ENCODE measurements at regions of chrX and their contacts with region 1.

Region 1: DNA sequence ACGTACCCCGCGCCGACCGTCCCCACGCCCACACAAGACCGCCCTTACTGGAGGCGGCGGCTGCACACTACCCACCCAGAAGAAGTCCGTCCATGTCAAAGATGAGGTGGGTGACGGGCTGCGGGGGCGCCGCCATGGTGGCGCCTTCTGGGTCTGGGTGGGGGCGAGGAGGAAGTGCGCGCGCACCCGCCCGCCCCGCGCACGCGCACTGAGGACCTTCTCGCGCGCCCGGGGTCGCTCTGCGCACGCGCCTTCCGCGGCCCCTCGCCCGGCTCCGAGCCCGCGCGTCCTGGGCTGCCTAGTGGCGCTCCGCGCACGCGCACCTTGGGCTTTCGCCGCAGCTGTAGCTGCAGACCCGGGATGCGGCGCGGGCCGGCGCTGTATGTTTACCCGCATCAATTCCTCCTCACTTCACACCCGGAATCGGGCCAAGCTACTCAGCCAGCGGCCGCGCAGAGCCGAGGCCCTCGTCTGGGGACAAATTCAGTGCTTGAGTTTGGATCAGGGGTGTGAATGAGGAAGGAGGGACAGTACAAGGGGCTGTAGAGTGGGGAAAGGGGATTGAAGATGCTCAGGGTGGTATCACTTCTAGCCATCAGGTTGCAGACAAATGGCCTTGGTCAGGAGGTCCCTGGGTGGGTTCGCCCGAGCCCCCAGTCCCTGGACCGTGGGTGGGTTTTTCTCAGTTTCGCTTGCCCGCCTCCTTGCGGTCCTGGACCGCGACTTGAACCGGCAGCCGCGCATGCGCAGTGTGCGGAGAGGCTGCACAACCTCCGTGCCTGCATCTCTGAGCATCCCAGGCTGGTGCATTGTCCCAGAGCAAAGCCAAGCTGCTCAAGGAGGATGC is at the start of gene PUDP:
- DNase-seq: peak; percentile 85
- H3K4me3 Mint-ChIP-seq: peak within 1 kb of the TSS; percentile 79
- H3K27ac Mint-ChIP-seq: peak within 1 kb of the TSS; percentile 87
- H3K4me1 Mint-ChIP-seq: peaks cover 18% of the 10 kb centered on the region
- H3K27me3 Mint-ChIP-seq: no peaks in the 10 kb centered on the region
- total RNA-seq, gene PUDP: 16.3 to 16.4 TPM

Region 2: DNA sequence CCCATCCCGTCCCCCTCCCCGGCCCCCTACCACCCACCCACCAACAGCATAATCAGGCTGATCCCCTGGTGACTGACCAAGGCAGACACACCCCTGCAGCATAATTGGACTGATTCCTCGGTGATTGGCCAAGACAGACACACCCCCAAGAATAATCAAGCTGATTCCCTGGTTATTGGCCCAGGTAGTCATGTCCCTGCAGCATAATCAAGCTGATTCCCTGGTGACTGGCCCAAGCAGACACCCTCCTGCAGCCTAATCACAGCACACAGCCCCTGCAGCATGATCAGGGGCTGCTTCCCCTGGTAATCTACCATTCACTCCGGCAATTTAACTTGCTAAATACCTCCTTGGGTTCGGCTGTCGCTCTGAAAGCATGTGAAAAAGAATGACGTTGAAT is 48.2 kb before region 1 on chrX:
- CTCF ChIA-PET with region 1: no interaction called
- POLR2A ChIA-PET with region 1: no interaction called
- DNase-seq: no peak
- H3K4me3 Mint-ChIP-seq: no peak overlapping the region
- H3K27ac Mint-ChIP-seq: no peak overlapping the region
- H3K4me1 Mint-ChIP-seq: no peaks in the 10 kb centered on the region
- H3K27me3 Mint-ChIP-seq: no peaks in the 10 kb centered on the region

Region 3: DNA sequence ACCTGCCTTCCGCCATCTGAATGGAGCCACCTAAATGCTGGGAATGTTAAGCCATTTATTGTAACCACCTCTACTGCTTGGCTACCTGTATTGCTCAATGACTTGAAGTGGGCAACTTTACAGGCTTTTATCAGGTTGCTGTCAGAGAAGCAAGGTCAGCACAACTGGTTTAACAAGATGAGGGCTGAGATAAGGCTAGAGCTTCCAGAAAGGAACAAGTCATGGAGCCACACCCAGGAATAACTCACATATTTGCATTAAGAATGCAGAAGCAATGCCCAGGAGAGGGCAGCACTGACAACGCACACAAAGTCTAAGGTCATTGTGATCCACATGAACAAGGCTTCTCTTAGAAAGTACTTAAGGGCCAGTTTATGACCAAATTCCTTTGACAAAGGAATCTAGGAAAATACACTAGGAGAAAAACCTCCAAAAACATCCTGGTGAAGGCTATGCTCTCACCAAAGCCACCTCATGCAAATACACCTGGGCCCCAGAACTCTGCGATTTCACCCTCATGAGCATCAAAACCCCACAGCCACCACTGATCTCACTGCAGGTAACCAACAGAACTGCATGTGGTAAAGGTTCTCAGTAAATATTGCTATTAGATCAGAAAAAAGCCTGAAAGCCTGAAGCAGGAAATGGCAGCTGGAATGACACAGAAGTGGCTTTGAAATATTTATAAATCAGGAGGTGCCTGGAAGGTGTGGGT is 15.7 kb before region 1 on chrX:
- CTCF ChIA-PET with region 1: interaction called, 4 read pairs
- POLR2A ChIA-PET with region 1: interaction called, 18 read pairs
- DNase-seq: peak; percentile 23
- H3K4me3 Mint-ChIP-seq: no peak overlapping the region
- H3K27ac Mint-ChIP-seq: peak overlapping the region; percentile 40
- H3K4me1 Mint-ChIP-seq: peaks cover 14% of the 10 kb centered on the region
- H3K27me3 Mint-ChIP-seq: no peaks in the 10 kb centered on the region

Region 4: DNA sequence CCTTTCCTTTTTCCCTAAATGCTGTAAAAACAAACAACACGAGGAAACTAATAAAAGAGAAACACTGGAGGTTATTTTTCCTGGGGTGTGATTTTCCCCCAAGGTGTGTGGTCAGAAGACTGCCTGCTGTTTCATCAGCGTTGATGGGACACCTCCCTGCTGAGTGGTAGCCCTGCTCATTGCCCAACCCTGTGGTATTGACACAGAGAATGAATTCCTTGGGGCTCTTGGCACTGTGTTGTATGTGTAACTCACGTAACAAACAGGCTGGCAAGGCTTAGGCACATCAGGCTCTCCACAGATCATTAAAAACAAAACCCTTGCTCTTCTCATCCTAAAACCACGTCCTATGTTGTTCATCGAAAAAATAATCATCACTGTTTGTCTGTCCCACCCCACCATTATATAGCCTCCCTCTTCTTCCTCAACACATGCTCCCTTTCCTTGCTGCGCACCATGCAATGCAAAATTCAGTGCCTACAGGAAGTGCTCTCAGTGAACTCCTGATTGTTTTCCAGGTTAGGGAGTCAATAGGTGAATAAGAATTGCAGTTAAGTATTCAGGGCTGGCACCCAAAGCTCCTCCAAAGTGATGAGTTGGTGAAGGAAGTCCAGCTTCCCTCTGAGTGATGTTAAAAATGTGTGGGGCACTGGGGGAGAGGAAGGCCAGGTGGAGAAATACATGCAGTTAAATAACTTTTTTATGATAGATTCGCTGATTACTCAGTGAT is 11.1 kb after region 1 on chrX:
- CTCF ChIA-PET with region 1: no interaction called
- POLR2A ChIA-PET with region 1: no interaction called
- DNase-seq: no peak
- H3K4me3 Mint-ChIP-seq: no peak overlapping the region
- H3K27ac Mint-ChIP-seq: no peak overlapping the region
- H3K4me1 Mint-ChIP-seq: peaks cover 5% of the 10 kb centered on the region
- H3K27me3 Mint-ChIP-seq: no peaks in the 10 kb centered on the region

Region 5: DNA sequence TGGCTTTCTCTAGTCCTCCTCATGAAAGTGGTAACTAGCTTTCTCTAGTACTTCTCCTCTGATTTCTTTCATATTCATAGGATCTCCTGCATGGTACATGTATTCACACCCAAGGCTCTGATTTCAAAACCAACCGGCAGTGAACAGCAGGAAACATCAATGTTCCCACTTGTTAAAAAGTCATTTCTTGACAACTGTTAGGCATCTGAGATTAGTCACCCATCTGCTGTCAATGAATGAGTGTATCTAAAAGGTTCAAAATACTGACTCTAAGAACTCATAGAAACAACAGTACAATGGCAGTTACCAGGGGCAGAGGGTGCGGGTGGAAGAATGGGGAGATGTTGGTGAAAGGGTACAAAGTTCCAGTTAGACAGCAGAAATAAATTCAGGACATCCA is 31.2 kb after region 1 on chrX:
- CTCF ChIA-PET with region 1: no interaction called
- POLR2A ChIA-PET with region 1: no interaction called
- DNase-seq: no peak
- H3K4me3 Mint-ChIP-seq: no peak overlapping the region
- H3K27ac Mint-ChIP-seq: no peak overlapping the region
- H3K4me1 Mint-ChIP-seq: no peaks in the 10 kb centered on the region
- H3K27me3 Mint-ChIP-seq: no peaks in the 10 kb centered on the region

Region 6: DNA sequence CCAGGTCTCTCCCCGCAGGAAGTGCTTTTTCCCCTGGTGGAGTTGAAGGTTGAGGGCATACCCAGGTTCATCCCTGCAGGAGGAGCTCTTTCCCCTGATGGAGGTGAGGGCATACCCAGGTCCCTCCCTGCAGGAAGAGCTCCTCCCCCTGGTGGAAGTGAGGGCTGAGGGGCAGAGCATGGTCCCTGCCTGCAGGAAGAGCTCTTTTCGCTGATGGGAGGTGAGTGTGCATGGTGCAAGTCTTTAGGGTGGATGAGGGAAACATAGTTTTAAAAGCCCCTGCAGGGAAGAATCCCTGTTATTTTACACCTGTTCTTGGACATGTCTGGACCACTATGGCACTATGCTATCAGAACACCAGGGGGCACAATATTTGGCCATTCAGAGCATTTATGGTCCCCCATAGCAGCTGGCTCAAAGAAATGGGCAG is 43.5 kb after region 1 on chrX:
- CTCF ChIA-PET with region 1: no interaction called
- POLR2A ChIA-PET with region 1: no interaction called
- DNase-seq: no peak
- H3K4me3 Mint-ChIP-seq: no peak overlapping the region
- H3K27ac Mint-ChIP-seq: no peak overlapping the region
- H3K4me1 Mint-ChIP-seq: no peaks in the 10 kb centered on the region
- H3K27me3 Mint-ChIP-seq: no peaks in the 10 kb centered on the region